A673 (cell line): ENCODE measurements at regions of chr2 and their contacts with region 1.

Region 1: GRCh38 chr2:118882709-118883210 is 35.3 kb upstream of the EN1 start:
- DNase-seq: peak; percentile 82
- H3K4me3 ChIP-seq: peak overlapping the region; percentile 39
- H3K27ac ChIP-seq: no peak overlapping the region
- H3K4me1 ChIP-seq: no peaks in the 10 kb centered on the region
- H3K27me3 ChIP-seq: no peaks in the 10 kb centered on the region
- CTCF ChIP-seq: peak; percentile 96

Region 2: GRCh38 chr2:118913131-118913802 is 30.5 kb after region 1 on chr2:
- CTCF ChIA-PET with region 1: interaction called, 10 read pairs
- POLR2A ChIA-PET with region 1: no interaction called
- intact Hi-C with region 1: no loop called
- DNase-seq: no peak
- H3K4me3 ChIP-seq: no peak overlapping the region
- H3K27ac ChIP-seq: no peak overlapping the region
- H3K4me1 ChIP-seq: no peaks in the 10 kb centered on the region
- H3K27me3 ChIP-seq: no peaks in the 10 kb centered on the region
- CTCF ChIP-seq: no peak

Region 3: GRCh38 chr2:119174216-119175037 is 291.7 kb after region 1 on chr2:
- CTCF ChIA-PET with region 1: interaction called, 4 read pairs
- POLR2A ChIA-PET with region 1: no interaction called
- intact Hi-C with region 1: loop called (anchors 5 kb)
- DNase-seq: peak; percentile 76
- H3K4me3 ChIP-seq: no peak overlapping the region
- H3K27ac ChIP-seq: no peak overlapping the region
- H3K4me1 ChIP-seq: no peaks in the 10 kb centered on the region
- H3K27me3 ChIP-seq: no peaks in the 10 kb centered on the region
- CTCF ChIP-seq: peak; percentile 93

Region 4: DNA sequence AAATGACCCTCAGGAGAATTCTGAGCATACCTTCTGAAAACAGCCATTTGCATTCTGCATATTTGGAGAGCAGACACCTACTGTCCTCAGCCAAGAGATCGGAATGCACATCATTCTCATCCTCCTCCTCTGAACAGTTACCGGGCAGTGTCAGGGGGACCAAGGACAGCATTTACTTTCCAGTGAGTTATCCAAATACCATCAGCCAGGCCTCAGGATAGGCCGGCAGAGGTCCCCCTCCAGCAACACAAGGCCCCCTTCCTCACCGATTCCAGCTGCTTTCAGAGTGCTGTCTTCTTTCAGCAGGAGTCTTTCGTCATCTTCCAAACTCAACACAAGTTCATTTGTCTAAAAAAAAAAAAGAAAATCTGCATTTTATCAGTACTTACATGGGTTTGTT is 428.6 kb after region 1 on chr2:
- CTCF ChIA-PET with region 1: interaction called, 7 read pairs
- POLR2A ChIA-PET with region 1: no interaction called
- intact Hi-C with region 1: loop called (anchors 1 kb)
- DNase-seq: peak; percentile 21
- H3K4me3 ChIP-seq: no peak overlapping the region
- H3K27ac ChIP-seq: no peak overlapping the region
- H3K4me1 ChIP-seq: no peaks in the 10 kb centered on the region
- H3K27me3 ChIP-seq: no peaks in the 10 kb centered on the region
- CTCF ChIP-seq: 0 out of 2 replicates have a peak, but pooled peaks have one; percentile 12

Region 5: DNA sequence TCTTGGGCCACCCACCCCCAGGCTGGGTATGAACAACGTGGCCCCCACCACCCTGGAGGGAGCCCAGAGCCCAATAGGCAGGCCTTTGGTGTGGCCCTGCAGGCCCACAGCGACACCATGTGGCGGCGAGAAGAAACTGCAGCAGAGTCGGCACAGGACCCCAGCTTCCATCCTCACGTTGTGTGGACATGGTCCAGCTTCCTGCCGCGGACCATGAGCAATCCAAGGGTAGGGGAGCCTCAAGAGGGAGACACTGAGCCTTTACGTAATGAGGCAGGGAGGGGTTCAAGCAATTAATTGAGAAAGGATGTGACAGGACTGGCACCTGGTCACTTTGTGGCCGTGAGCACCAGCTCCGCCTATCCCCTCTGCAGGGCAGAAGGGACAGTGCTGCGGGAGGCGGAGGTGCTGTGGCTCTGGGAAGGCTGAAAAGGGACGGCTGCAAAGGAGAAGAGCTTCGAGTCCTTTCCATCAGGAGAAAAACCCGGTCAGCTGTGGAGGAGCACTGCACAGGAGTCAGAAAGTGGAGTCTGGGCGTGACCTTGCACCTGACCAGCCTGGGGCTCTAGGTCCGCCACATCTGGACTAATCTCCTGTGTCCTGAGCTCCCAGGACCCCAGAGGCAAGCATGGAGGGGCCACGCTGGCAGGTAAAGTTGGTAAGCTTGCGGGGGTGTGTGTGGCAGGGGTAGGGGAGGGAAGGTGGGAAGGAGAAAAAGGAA is 593.7 kb after region 1 on chr2:
- CTCF ChIA-PET with region 1: interaction called, 13 read pairs
- POLR2A ChIA-PET with region 1: no interaction called
- intact Hi-C with region 1: loop called (anchors 5 kb)
- DNase-seq: peak; percentile 74
- H3K4me3 ChIP-seq: no peak overlapping the region
- H3K27ac ChIP-seq: no peak overlapping the region
- H3K4me1 ChIP-seq: peaks cover 11% of the 10 kb centered on the region
- H3K27me3 ChIP-seq: no peaks in the 10 kb centered on the region
- CTCF ChIP-seq: peak; percentile 99